CD4-positive, alpha-beta memory T cell (primary cell): ENCODE measurements at regions of chr18 and their contacts with region 1.

Region 1: DNA sequence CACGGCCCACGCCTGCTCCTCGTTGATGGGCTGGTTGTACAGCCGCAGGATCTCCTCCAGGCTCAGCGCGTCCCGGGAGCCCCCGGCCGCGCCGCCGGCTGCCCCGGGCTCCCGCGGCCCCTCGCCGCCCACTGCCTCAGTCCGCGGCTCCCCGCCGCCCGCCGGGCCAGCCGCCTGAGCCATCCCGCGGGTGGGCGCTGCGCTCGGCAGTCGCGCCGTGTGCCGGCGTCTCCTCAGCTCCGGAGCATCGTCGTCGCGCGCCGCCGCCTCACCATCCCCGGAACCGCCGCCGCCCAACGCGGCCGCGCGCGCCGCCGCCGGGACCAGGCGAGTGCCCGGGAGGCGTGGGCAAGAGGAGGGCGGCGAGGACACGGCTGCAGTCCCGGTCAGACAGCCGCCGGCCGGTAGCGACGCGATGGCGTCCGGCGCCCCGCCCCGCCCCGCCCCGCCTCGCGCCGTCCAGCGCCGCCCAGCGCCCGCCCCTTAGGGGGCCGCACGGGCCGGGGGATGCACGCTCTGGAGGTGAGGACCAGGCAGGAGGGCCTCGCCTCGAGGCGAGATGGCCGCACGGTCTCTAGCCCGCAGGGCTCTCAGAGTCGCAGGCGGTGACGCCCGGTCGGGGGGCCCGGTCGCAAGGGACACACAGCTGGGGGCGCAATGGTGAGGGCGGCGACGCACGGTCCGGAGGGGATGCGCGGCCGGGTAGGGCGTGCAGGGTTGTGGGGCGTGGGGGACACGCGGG is at the start of gene SPIRE1:
- DNase-seq: peak in 4 of 5 donors; percentile 32 to 43 (median 39)
- H3K4me3 ChIP-seq: peak within 1 kb of the TSS; percentile 42 to 63
- H3K4me3 Mint-ChIP-seq: peak within 1 kb of the TSS; percentile 84 to 94 (median 92)
- H3K27ac ChIP-seq: no peak within 1 kb of the TSS
- H3K27ac Mint-ChIP-seq: peak within 1 kb of the TSS; percentile 11 to 87 (median 75)
- H3K4me1 ChIP-seq: peaks cover 9% of the 10 kb centered on the region
- H3K4me1 Mint-ChIP-seq: peaks cover 13 to 21% (median 17%) of the 10 kb centered on the region in 4 donors
- H3K27me3 ChIP-seq: no peaks in the 10 kb centered on the region
- H3K27me3 Mint-ChIP-seq: peaks cover 1 to 2% of the 10 kb centered on the region in 2 donors
- total RNA-seq, gene SPIRE1: 1.7 to 1.8 TPM

Region 2: GRCh38 chr18:12271376-12272235 is 386.2 kb before region 1 on chr18:
- CTCF ChIA-PET with region 1: no interaction called
- POLR2A ChIA-PET with region 1: no interaction called
- intact Hi-C with region 1: loop called (anchors 1 kb)
- DNase-seq: peak in 4 of 5 donors; percentile 15 to 41 (median 40)
- H3K4me3 ChIP-seq: peak overlapping the region in 1 of 2 donors; percentile 9
- H3K4me3 Mint-ChIP-seq: peak overlapping the region in 7 of 8 donors; percentile 43 to 77 (median 71)
- H3K27ac ChIP-seq: no peak overlapping the region
- H3K27ac Mint-ChIP-seq: no peak overlapping the region
- H3K4me1 ChIP-seq: no peaks in the 10 kb centered on the region
- H3K4me1 Mint-ChIP-seq: peaks cover 0 to 4% (median 1%) of the 10 kb centered on the region in 4 donors
- H3K27me3 ChIP-seq: no peaks in the 10 kb centered on the region
- H3K27me3 Mint-ChIP-seq: peaks cover 4 to 16% of the 10 kb centered on the region in 2 donors

Region 3: DNA sequence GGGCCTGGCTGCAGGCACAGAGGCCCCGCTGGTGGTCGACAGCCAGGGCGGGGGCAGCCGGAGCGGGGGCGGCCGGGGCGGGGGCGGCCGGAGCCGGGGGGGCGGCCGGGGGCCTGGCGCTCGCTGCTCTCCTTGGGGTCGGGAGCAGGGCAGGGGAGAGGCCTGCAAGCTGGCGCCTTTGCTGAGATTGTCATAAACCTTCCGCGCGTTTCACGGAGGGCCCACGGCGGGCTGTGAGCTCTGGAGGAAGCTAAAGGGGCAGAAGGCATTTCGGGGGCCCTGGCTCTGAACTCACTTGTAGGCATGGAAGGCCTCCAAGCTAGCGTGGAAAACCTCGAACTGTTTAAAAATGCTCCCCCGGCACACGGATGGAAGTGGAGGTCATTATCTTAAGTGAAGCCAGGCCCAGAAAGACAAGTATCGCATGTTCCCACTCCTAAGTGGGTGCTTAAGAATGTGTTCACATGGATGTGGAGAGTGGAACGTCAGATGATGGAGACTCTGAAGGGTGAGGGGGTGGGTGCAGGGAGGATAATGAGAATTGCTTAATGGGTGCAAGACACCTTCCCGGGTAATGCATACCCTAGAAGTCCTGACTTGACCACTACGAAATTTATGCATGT is 249.5 kb before region 1 on chr18:
- CTCF ChIA-PET with region 1: interaction called, 3 read pairs
- POLR2A ChIA-PET with region 1: interaction called, 3 read pairs
- intact Hi-C with region 1: loop called (anchors 5 kb)
- DNase-seq: peak in 1 of 5 donors; percentile 6
- H3K4me3 ChIP-seq: no peak overlapping the region
- H3K4me3 Mint-ChIP-seq: peak overlapping the region; percentile 58 to 75 (median 68)
- H3K27ac ChIP-seq: no peak overlapping the region
- H3K27ac Mint-ChIP-seq: peak overlapping the region in 3 of 7 donors; percentile 31 to 79 (median 35)
- H3K4me1 ChIP-seq: peaks cover 18% of the 10 kb centered on the region
- H3K4me1 Mint-ChIP-seq: peaks cover 12 to 38% (median 19%) of the 10 kb centered on the region in 4 donors
- H3K27me3 ChIP-seq: no peaks in the 10 kb centered on the region
- H3K27me3 Mint-ChIP-seq: peaks cover 11 to 15% of the 10 kb centered on the region in 2 donors